K562 (cell line): ENCODE measurements at regions of chr5 and their contacts with region 1.

Region 1: DNA sequence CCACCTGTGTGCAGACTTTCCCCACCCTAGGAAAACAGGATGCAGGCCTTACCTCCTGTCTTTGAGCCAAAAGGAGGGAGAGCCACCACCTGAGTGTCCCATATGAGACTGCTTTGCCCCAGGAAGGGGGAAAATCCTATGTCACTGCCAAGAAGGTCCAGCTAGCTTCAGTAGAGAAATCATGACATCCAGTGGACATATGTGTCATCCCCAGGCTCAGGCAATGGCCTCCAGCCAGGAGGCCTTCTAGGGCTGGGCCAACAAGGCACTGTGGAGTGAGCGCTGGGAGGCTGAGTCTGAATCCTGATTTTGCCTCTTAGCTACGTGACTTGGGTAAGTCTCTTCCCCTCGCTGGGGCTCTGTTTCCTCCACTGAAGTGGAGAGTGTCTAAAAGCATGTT is 60.2 kb downstream of the SMIM23 start:
- DNase-seq: peak in 2 of 4 experiments; percentile 15 to 18
- ATAC-seq: peak; percentile 50
- H3K4me3 ChIP-seq: no peak overlapping the region
- H3K27ac ChIP-seq: no peak overlapping the region
- H3K4me1 ChIP-seq: peaks cover 12 to 15% of the 10 kb centered on the region in 2 experiments; a peak in 4 of 5 replicates
- H3K27me3 ChIP-seq: no peaks in the 10 kb centered on the region
- CTCF ChIP-seq: peak; percentile 11 to 26 (median 22); a peak in 1 of 6 replicates
- EP300 ChIP-seq: no peak
- POLR2A ChIP-seq: no peak
- RAD21 ChIP-seq: peak in 1 of 2 experiments; percentile 57; a peak in 2 of 4 replicates

Region 2: GRCh38 chr5:171630027-171630669 is 215.7 kb before region 1 on chr5:
- CTCF ChIA-PET with region 1: no interaction called
- POLR2A ChIA-PET with region 1: no interaction called
- in situ Hi-C with region 1: no loop called
- intact Hi-C with region 1: loop called (anchors 5 kb)
- DNase-seq: peak; percentile 31 to 61 (median 46)
- ATAC-seq: peak; percentile 99
- H3K4me3 ChIP-seq: no peak overlapping the region
- H3K27ac ChIP-seq: no peak overlapping the region
- H3K4me1 ChIP-seq: peaks cover 0 to 5% of the 10 kb centered on the region in 2 experiments; a peak in 2 of 5 replicates
- H3K27me3 ChIP-seq: peaks cover 11 to 34% of the 10 kb centered on the region in 2 experiments
- CTCF ChIP-seq: peak; percentile 43 to 51 (median 51)
- EP300 ChIP-seq: no peak
- POLR2A ChIP-seq: no peak
- RAD21 ChIP-seq: peak in 1 of 2 experiments; percentile 54; a peak in 3 of 4 replicates

Region 3: DNA sequence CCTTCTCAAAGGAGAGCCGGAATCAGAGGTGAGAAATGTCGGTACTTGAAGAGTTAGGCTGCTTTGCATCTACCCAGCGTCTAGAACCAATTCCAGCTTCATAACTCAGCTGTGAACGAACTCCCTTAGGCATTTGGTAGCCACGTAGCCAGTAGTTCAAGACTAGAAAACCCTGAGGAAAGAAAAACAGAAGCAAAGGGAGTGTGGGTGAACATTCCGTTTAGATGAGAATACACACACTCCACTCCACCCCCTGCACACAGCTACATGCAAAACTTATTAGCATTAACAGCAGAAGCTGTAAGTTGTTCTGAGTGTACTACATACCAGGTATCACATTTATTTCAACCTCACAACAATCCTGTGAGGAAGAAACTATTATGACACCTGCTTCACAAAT is 18.1 kb after region 1 on chr5:
- CTCF ChIA-PET with region 1: no interaction called
- POLR2A ChIA-PET with region 1: no interaction called
- in situ Hi-C with region 1: no loop called
- intact Hi-C with region 1: no loop called
- DNase-seq: no peak
- ATAC-seq: no peak
- H3K4me3 ChIP-seq: no peak overlapping the region
- H3K27ac ChIP-seq: no peak overlapping the region
- H3K4me1 ChIP-seq: no peaks in the 10 kb centered on the region
- H3K27me3 ChIP-seq: no peaks in the 10 kb centered on the region
- CTCF ChIP-seq: no peak
- EP300 ChIP-seq: no peak
- POLR2A ChIP-seq: no peak
- RAD21 ChIP-seq: no peak